B cell (primary cell): ENCODE measurements at regions of chr2 and their contacts with region 1.

Region 1: GRCh38 chr2:85538486-85539360 is at the start of gene MAT2A:
- DNase-seq: peak; percentile 94
- ATAC-seq: peak; percentile 80
- H3K4me3 ChIP-seq: peak within 1 kb of the TSS; percentile 78 to 99 (median 92)
- H3K4me3 Mint-ChIP-seq: peak within 1 kb of the TSS; percentile 98
- H3K27ac ChIP-seq: peak within 1 kb of the TSS; percentile 81 to 89
- H3K27ac Mint-ChIP-seq: peak within 1 kb of the TSS; percentile 99
- H3K4me1 ChIP-seq: peaks cover 21 to 30% of the 10 kb centered on the region in 2 donors
- H3K4me1 Mint-ChIP-seq: peaks cover 37% of the 10 kb centered on the region
- H3K27me3 ChIP-seq: no peaks in the 10 kb centered on the region
- H3K27me3 Mint-ChIP-seq: no peaks in the 10 kb centered on the region
- CTCF ChIP-seq: peak; percentile 52
- total RNA-seq, gene MAT2A: 177 and 190 TPM in 2 replicates

Region 2: DNA sequence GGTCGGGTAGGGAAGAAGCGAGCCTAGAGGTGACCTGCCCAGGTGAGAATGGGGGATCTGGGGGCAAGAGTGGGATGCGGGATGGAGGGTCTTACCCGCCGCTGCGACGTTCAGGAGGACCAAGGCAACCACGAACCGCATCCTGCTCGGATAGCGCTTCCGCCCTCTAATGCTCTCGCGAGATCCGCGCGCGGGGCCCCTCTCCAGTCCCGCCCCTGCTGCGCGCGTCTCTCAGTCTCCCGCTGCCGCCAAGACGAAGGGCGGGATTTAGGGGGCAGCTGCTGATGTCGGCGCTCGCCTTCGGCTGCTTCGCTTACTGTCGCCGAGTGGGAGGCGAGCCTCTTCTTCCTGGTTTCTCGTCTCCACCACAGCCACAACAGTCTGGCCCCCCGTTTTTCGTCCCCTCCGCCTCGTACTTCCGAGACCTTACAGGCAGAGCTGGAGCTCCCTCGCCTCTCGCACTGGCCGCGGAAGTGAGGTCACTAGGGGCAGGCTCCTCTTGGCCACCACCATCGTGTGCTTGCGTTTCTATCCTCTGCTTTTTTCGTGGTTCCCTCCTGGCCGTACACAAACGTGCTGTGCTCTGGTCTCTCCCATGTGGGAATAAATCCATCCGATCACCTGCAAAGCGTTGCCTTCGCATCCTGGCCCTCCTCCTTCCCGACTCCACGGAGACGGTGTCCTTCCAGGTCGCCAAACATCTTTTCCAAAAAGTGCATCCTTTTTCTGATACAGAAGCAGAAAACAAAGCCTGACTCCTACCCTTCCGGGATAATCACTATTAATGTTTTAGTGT is 210.7 kb before region 1 on chr2 and contains the start of gene TGOLN2:
- CTCF ChIA-PET with region 1: interaction called, 3 read pairs
- POLR2A ChIA-PET with region 1: interaction called, 34 read pairs
- intact Hi-C with region 1: no loop called
- DNase-seq: peak; percentile 97
- ATAC-seq: peak; percentile 90
- H3K4me3 ChIP-seq: peak within 1 kb of the TSS; percentile 44 to 96 (median 86)
- H3K4me3 Mint-ChIP-seq: peak within 1 kb of the TSS; percentile 100
- H3K27ac ChIP-seq: peak within 1 kb of the TSS; percentile 83 to 99
- H3K27ac Mint-ChIP-seq: peak within 1 kb of the TSS; percentile 100
- H3K4me1 ChIP-seq: peaks cover 34 to 42% of the 10 kb centered on the region in 2 donors
- H3K4me1 Mint-ChIP-seq: peaks cover 59% of the 10 kb centered on the region
- H3K27me3 ChIP-seq: no peaks in the 10 kb centered on the region
- H3K27me3 Mint-ChIP-seq: no peaks in the 10 kb centered on the region
- CTCF ChIP-seq: no peak
- total RNA-seq, gene TGOLN2: 172 and 181 TPM in 2 replicates

Region 3: GRCh38 chr2:85409845-85410583 is 128.7 kb before region 1 on chr2 and contains the start of gene CAPG:
- CTCF ChIA-PET with region 1: no interaction called
- POLR2A ChIA-PET with region 1: interaction called, 12 read pairs
- intact Hi-C with region 1: no loop called
- DNase-seq: peak; percentile 82
- ATAC-seq: peak; percentile 78
- H3K4me3 ChIP-seq: peak within 1 kb of the TSS; percentile 43 to 75 (median 57)
- H3K4me3 Mint-ChIP-seq: peak within 1 kb of the TSS; percentile 90
- H3K27ac ChIP-seq: peak within 1 kb of the TSS; percentile 71 to 84
- H3K27ac Mint-ChIP-seq: peak within 1 kb of the TSS; percentile 91
- H3K4me1 ChIP-seq: peaks cover 73 to 84% of the 10 kb centered on the region in 2 donors
- H3K4me1 Mint-ChIP-seq: peaks cover 76% of the 10 kb centered on the region
- H3K27me3 ChIP-seq: no peaks in the 10 kb centered on the region
- H3K27me3 Mint-ChIP-seq: no peaks in the 10 kb centered on the region
- CTCF ChIP-seq: no peak
- total RNA-seq, gene CAPG: 179 and 210 TPM in 2 replicates

Region 4: DNA sequence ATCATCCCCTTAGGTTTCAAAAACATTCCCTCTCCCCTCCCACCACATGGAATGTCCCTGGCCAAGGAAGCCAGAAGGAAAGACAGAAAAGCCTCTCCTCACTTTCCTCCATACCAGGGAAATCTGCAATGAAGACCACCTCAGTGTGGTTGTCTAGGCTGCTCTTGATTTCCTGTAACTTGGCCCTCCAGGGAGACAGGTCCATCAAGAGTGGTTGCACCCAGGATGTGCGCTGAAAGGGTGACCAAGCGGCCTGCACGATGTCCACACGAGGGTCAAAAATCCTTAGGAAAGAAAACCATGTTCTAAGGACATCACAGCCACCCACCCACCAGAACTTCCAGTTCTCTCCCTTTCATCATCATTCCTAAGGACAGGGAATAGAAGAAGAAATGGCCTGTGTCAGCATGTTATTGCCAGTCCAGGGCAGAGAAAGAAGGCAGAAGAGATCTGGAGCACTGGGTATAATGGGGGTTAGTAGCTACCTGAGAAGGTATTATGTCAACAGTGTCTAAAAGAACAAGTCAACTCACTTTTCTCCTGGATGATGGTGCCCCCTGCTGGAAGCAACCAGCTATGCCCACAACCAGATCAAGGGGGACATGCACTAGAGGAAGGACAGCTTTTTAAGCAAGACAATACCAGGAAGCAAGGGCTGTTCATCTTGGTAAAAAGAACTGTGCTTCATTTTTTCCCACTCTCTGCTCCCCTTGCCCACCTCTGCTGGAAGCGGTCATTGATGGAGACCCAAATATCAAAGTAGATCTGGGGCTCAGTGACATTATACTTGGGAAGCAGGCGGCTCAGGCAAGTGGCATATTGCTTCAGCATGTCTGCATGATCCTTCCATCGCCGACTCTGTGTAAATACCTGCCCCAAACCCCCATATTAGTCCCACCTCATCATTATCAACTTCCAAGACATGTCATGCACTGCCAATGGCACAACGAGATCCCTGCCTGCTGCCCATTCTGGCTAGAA is 13.3 kb after region 1 on chr2:
- CTCF ChIA-PET with region 1: interaction called, 104 read pairs
- POLR2A ChIA-PET with region 1: interaction called, 30 read pairs
- intact Hi-C with region 1: loop called (anchors 1 kb)
- DNase-seq: peak; percentile 90
- ATAC-seq: peak; percentile 97
- H3K4me3 ChIP-seq: no peak overlapping the region
- H3K4me3 Mint-ChIP-seq: no peak overlapping the region
- H3K27ac ChIP-seq: no peak overlapping the region
- H3K27ac Mint-ChIP-seq: peak overlapping the region; percentile 81
- H3K4me1 ChIP-seq: peaks cover 0 to 3% of the 10 kb centered on the region in 2 donors
- H3K4me1 Mint-ChIP-seq: peaks cover 4% of the 10 kb centered on the region
- H3K27me3 ChIP-seq: no peaks in the 10 kb centered on the region
- H3K27me3 Mint-ChIP-seq: no peaks in the 10 kb centered on the region
- CTCF ChIP-seq: peak; percentile 91

Region 5: GRCh38 chr2:85602476-85603234 is 63.9 kb after region 1 on chr2 and contains the start of gene TMEM150A:
- CTCF ChIA-PET with region 1: no interaction called
- POLR2A ChIA-PET with region 1: interaction called, 3 read pairs
- intact Hi-C with region 1: loop called (anchors 1 kb)
- DNase-seq: peak; percentile 93
- ATAC-seq: peak; percentile 97
- H3K4me3 ChIP-seq: peak within 1 kb of the TSS; percentile 72 to 92 (median 86)
- H3K4me3 Mint-ChIP-seq: peak within 1 kb of the TSS; percentile 95
- H3K27ac ChIP-seq: peak within 1 kb of the TSS; percentile 20 to 74
- H3K27ac Mint-ChIP-seq: peak within 1 kb of the TSS; percentile 89
- H3K4me1 ChIP-seq: peaks cover 17 to 23% of the 10 kb centered on the region in 2 donors
- H3K4me1 Mint-ChIP-seq: peaks cover 30% of the 10 kb centered on the region
- H3K27me3 ChIP-seq: no peaks in the 10 kb centered on the region
- H3K27me3 Mint-ChIP-seq: no peaks in the 10 kb centered on the region
- CTCF ChIP-seq: no peak
- total RNA-seq, gene TMEM150A: 23.0 and 23.1 TPM in 2 replicates

Region 6: DNA sequence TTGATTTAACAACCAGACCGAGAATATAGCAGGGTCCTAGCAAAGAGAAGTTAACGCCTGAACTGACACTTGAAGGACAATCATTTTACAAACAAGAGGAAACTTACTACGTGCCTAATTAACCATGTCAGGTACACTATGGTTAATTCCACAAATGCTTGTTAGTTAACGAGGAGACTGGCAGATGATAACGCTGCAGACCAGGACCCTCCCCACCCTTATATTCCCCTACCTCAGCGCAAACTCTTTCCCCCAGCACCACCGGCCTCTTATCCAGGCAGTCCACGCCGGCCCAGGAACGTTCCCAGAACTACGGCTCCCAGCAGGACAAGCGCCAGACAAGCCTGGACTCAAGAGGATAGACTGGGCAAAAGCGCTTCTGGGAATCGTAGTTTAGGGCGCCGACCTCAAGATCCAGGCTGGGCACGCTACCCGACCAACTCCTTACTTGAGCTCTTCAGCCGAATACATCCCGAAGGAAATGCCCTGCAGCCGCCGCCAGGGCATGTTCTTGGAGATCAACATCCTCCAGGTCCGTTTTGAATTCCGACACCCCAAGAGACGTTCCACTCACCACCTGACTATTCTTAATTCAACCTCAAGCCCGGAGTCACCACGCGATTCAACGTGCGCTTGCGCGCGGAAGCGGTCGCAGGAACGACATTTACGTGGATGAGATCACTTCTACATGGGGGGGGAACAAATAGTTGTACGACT is 566.7 kb after region 1 on chr2 and contains the start of gene POLR1A:
- CTCF ChIA-PET with region 1: no interaction called
- POLR2A ChIA-PET with region 1: no interaction called
- intact Hi-C with region 1: no loop called
- DNase-seq: peak; percentile 95
- ATAC-seq: peak; percentile 76
- H3K4me3 ChIP-seq: peak within 1 kb of the TSS; percentile 88 to 96 (median 89)
- H3K4me3 Mint-ChIP-seq: peak within 1 kb of the TSS; percentile 93
- H3K27ac ChIP-seq: peak within 1 kb of the TSS; percentile 74 to 92
- H3K27ac Mint-ChIP-seq: peak within 1 kb of the TSS; percentile 95
- H3K4me1 ChIP-seq: peaks cover 16 to 22% of the 10 kb centered on the region in 2 donors
- H3K4me1 Mint-ChIP-seq: peaks cover 50% of the 10 kb centered on the region
- H3K27me3 ChIP-seq: no peaks in the 10 kb centered on the region
- H3K27me3 Mint-ChIP-seq: no peaks in the 10 kb centered on the region
- CTCF ChIP-seq: no peak
- total RNA-seq, gene POLR1A: 32.7 and 36.8 TPM in 2 replicates

Region 7: GRCh38 chr2:86195055-86195807 is 656.5 kb after region 1 on chr2 and contains the start of gene IMMT:
- CTCF ChIA-PET with region 1: no interaction called
- POLR2A ChIA-PET with region 1: interaction called, 3 read pairs
- intact Hi-C with region 1: loop called (anchors 1 kb)
- DNase-seq: peak; percentile 94
- ATAC-seq: peak; percentile 90
- H3K4me3 ChIP-seq: peak within 1 kb of the TSS; percentile 76 to 99 (median 91)
- H3K4me3 Mint-ChIP-seq: peak within 1 kb of the TSS; percentile 94
- H3K27ac ChIP-seq: peak within 1 kb of the TSS; percentile 90 to 94
- H3K27ac Mint-ChIP-seq: peak within 1 kb of the TSS; percentile 89
- H3K4me1 ChIP-seq: peaks cover 25 to 28% of the 10 kb centered on the region in 2 donors
- H3K4me1 Mint-ChIP-seq: peaks cover 49% of the 10 kb centered on the region
- H3K27me3 ChIP-seq: no peaks in the 10 kb centered on the region
- H3K27me3 Mint-ChIP-seq: no peaks in the 10 kb centered on the region
- CTCF ChIP-seq: no peak
- total RNA-seq, gene IMMT: 63.5 and 66.0 TPM in 2 replicates